ENCODE measurements at regions of chr2 and their contacts with region 1.

Region 1: DNA sequence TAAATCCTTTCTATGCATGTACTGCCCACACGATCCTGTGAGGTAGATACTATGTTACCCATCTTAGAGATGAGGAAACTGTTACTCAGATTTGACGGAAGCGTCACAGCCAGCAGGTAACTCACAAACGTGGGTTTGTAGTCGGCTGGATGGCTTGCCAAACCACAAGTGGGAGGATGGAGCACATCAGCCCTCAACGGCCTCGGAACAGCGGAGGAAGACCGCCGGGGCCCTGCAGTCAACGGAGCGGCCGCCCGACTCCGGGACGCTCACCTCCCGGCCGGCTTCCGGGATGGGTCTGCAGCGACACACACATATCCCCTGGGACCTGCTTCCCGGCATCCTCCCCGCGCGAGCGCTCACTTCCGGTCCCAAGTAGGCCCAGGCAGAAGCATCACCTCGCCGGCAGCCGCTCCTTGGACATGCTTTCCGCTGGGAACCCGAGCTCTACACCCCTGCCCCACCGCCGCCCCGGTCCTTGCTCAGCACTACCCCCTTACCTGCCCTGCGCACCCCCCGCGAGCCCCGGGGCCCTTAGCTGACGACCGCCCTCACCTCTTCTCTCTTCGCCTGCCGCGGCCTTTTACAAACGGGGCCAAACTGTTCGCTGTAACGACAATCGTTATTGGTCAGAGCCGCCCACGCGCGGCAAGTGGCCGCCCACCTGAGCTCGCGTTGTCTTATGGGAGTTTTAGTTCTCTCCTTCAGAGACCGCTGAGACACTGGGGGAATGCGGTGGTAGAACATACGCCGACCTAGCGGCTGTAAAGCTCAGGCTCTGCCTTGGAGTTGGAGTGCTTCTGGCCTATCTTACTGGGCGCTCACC is at the start of gene C2orf42:
- DNase-seq: peak; percentile 97
- H3K4me3 ChIP-seq: peak within 1 kb of the TSS; percentile 77 to 84 (median 79)
- H3K27ac ChIP-seq: peak within 1 kb of the TSS; percentile 91
- H3K4me1 ChIP-seq: peaks cover 4% of the 10 kb centered on the region
- H3K27me3 ChIP-seq: no peaks in the 10 kb centered on the region
- CTCF ChIP-seq: no peak
- total RNA-seq, gene C2orf42: 17.3 to 20.2 TPM

Region 2: GRCh38 chr2:69163109-69163508 is 1027.5 kb before region 1 on chr2:
- CTCF ChIA-PET with region 1: no interaction called
- dilution Hi-C with region 1: no loop called
- in situ Hi-C with region 1: no loop called
- intact Hi-C with region 1: no loop called
- DNase-seq: peak; percentile 55
- H3K4me3 ChIP-seq: no peak overlapping the region
- H3K27ac ChIP-seq: peak overlapping the region; percentile 2
- H3K4me1 ChIP-seq: peaks cover 46% of the 10 kb centered on the region
- H3K27me3 ChIP-seq: no peaks in the 10 kb centered on the region
- CTCF ChIP-seq: no peak

Region 3: DNA sequence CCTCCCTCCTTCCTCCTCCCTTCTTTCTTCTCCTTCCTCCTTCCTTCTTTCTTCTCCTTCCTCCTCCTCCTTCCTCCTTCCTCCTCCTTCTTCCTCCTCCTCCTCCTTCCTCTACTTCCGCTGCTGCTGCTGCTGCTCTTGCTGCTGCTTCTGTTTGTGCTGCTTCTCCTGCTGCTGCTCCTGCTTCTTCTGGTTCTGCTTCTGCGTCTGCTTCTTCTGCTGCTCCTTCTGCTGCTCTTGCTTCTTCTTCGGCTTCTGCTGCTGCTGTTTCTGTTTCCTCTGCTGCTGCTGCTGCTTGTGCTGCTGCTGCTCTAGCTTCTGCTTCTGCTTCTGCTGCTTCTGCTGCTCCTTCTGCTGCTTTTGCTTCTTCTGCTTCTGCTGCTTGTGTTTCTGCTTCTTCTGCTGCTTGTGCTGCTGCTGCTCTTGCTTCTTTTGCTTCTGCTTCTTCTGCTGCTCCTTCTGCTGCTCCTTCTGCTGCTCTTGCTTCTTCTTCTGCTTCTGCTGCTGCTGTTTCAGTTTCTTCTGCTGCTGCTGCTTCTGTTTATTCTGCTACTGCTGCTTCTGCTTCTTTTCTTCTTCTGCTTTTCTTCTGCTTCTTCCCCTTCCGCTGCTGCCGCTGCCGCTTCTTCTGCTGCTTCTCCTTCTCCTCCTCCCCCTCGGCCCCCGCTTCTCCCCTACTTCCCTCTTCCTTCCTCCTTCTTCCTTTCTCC is 288.3 kb before region 1 on chr2:
- CTCF ChIA-PET with region 1: no interaction called
- dilution Hi-C with region 1: no loop called
- in situ Hi-C with region 1: no loop called
- intact Hi-C with region 1: no loop called
- DNase-seq: no peak
- H3K4me3 ChIP-seq: no peak overlapping the region
- H3K27ac ChIP-seq: no peak overlapping the region
- H3K4me1 ChIP-seq: no peaks in the 10 kb centered on the region
- H3K27me3 ChIP-seq: no peaks in the 10 kb centered on the region
- CTCF ChIP-seq: no peak

Region 4: GRCh38 chr2:70086838-70087701 is 103.6 kb before region 1 on chr2 and contains the start of gene PCBP1:
- CTCF ChIA-PET with region 1: no interaction called
- dilution Hi-C with region 1: no loop called
- in situ Hi-C with region 1: no loop called
- intact Hi-C with region 1: loop called (anchors 2 kb)
- DNase-seq: peak; percentile 86
- H3K4me3 ChIP-seq: peak within 1 kb of the TSS; percentile 85 to 96 (median 86)
- H3K27ac ChIP-seq: peak within 1 kb of the TSS; percentile 99
- H3K4me1 ChIP-seq: peaks cover 36% of the 10 kb centered on the region
- H3K27me3 ChIP-seq: no peaks in the 10 kb centered on the region
- CTCF ChIP-seq: no peak
- total RNA-seq, gene PCBP1: 47.2 to 258 TPM

Measured in mammary epithelial cell (primary cell).